ENCODE measurements at regions of chr20 and their contacts with region 1.

Region 1: DNA sequence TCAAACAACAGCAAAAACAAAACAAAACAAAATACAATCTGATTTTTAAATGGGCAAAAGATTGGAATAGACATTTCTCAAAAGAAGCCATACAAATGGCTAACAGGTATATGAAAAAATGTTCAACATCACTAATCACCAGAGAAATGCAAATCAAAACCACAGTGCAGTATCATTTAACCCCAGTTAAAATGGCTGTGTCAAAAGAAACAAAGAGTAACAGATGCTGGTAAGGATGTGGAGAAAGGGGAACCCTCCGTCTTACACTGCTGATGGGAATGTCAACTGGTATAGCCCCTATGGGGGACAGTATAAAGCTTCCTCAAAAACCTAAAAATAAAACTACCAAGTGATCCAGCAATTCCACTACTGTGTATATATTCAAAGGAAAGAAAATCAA is 10.9 kb upstream of the NELFCD start:
- DNase-seq: no peak
- H3K4me3 ChIP-seq: no peak overlapping the region
- H3K4me3 Mint-ChIP-seq: no peak overlapping the region
- H3K27ac ChIP-seq: no peak overlapping the region
- H3K27ac Mint-ChIP-seq: no peak overlapping the region
- H3K4me1 ChIP-seq: peaks cover 10 to 11% of the 10 kb centered on the region in 2 donors
- H3K4me1 Mint-ChIP-seq: peaks cover 11% of the 10 kb centered on the region
- H3K27me3 ChIP-seq: no peaks in the 10 kb centered on the region
- H3K27me3 Mint-ChIP-seq: peaks cover 9 to 17% (median 13%) of the 10 kb centered on the region in 3 donors
- CTCF ChIP-seq: no peak

Region 2: DNA sequence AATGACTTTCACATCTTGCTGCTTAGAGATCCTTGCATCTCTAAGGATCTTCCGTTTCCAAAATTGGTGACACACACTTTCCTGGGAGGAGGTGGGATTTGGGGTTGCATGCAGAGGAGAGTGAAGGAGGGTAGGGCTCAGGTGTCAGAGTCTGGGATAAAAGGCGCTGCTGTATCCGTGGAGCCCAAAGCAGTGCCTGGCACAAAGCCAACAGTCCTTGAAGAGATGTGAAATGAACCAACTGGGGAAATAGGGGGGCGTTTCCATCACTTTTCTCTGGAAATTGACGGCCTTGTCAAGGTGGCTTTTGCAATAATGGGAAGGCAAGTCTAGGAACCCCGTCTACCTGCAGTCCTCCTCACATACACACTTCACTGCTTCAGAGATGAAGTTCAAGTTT is 48.6 kb before region 1 on chr20:
- intact Hi-C with region 1: loop called in 1 of 2 experiments (anchors 5 kb)
- DNase-seq: no peak
- H3K4me3 ChIP-seq: no peak overlapping the region
- H3K4me3 Mint-ChIP-seq: no peak overlapping the region
- H3K27ac ChIP-seq: no peak overlapping the region
- H3K27ac Mint-ChIP-seq: no peak overlapping the region
- H3K4me1 ChIP-seq: peaks cover 0 to 7% of the 10 kb centered on the region in 2 donors
- H3K4me1 Mint-ChIP-seq: peaks cover 8% of the 10 kb centered on the region
- H3K27me3 ChIP-seq: no peaks in the 10 kb centered on the region
- H3K27me3 Mint-ChIP-seq: peaks cover 0 to 2% (median 0%) of the 10 kb centered on the region in 3 donors
- CTCF ChIP-seq: no peak

Region 3: DNA sequence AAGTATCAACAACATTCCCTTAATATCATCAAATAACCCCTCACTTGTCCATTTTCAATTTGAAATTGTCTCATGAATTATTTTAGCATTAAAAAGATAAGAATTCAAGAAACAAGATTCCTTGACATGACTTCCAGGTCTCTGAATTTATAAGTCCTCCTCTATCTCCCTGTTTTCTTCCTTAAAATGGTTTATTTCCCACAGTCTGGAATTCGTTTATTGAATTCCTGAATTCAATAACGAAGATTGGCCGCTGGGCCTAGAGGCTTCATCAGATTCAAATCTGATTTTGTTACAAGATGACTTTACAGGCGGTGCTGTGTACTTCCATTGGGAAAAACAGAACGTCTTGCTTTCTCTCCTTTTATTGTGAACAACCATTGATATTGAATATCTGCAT is 38.0 kb before region 1 on chr20:
- intact Hi-C with region 1: no loop called
- DNase-seq: no peak
- H3K4me3 ChIP-seq: no peak overlapping the region
- H3K4me3 Mint-ChIP-seq: no peak overlapping the region
- H3K27ac ChIP-seq: no peak overlapping the region
- H3K27ac Mint-ChIP-seq: no peak overlapping the region
- H3K4me1 ChIP-seq: peaks cover 3 to 9% of the 10 kb centered on the region in 2 donors
- H3K4me1 Mint-ChIP-seq: peaks cover 11% of the 10 kb centered on the region
- H3K27me3 ChIP-seq: no peaks in the 10 kb centered on the region
- H3K27me3 Mint-ChIP-seq: peaks cover 0 to 1% (median 0%) of the 10 kb centered on the region in 3 donors
- CTCF ChIP-seq: no peak